Stomach (tissue), 19 donors: ENCODE measurements at regions of chr15 and their contacts with region 1.

Region 1: GRCh38 chr15:31215490-31216214 is 111.0 kb upstream of the KLF13 start:
- DNase-seq: peak; percentile 90 to 93
- H3K4me3 ChIP-seq: peak overlapping the region; percentile 50 to 62 (median 56)
- H3K27ac ChIP-seq: peak overlapping the region; percentile 91 to 99 (median 98)
- H3K4me1 ChIP-seq: peaks cover 12 to 56% (median 29%) of the 10 kb centered on the region in 4 donors
- H3K27me3 ChIP-seq: no peaks in the 10 kb centered on the region
- CTCF ChIP-seq: peak in 5 of 7 experiments; percentile 89 to 94 (median 92)
- EP300 ChIP-seq: no peak
- POLR2A ChIP-seq: no peak

Region 2: DNA sequence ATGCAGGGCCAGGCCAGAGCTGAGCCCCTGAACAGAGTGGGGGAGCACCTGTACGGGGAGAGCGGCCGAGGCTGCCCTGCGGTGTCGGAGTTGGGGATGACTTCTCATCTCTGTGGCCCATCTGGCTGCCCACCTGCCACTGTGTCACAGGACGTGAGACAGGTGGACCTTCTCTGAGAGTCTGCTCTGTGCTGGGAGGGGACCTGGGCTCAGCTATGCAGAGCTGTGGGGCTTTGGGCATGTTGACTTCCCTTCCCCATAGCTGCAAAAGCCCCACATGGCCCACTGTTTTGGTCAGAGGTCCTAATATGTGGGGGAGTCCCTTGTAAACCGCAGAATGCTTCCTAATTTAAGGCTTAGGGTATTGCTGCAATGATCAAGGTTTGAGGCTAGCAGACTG is 46.1 kb before region 1 on chr15:
- intact Hi-C with region 1: no loop called
- DNase-seq: no peak
- H3K4me3 ChIP-seq: no peak overlapping the region
- H3K27ac ChIP-seq: no peak overlapping the region
- H3K4me1 ChIP-seq: no peaks in the 10 kb centered on the region
- H3K27me3 ChIP-seq: no peaks in the 10 kb centered on the region
- CTCF ChIP-seq: no peak
- EP300 ChIP-seq: no peak
- POLR2A ChIP-seq: no peak

Region 3: GRCh38 chr15:31311735-31312619 is 96.3 kb after region 1 on chr15:
- intact Hi-C with region 1: loop called (anchors 10 kb)
- DNase-seq: peak in 1 of 2 donors; percentile 1
- H3K4me3 ChIP-seq: no peak overlapping the region
- H3K27ac ChIP-seq: no peak overlapping the region
- H3K4me1 ChIP-seq: peaks cover 0 to 4% (median under 1%) of the 10 kb centered on the region in 4 donors
- H3K27me3 ChIP-seq: peaks cover 0 to 14% (median 0%) of the 10 kb centered on the region in 3 donors
- CTCF ChIP-seq: no peak
- EP300 ChIP-seq: no peak
- POLR2A ChIP-seq: no peak